Left colon (tissue), 2 donors: ENCODE measurements at regions of chr21 and their contacts with region 1.

Region 1: GRCh38 chr21:43975495-43975993 is 36.6 kb upstream of the TRAPPC10 start:
- DNase-seq: peak; percentile 66 to 85
- ATAC-seq: peak; percentile 80

Region 2: DNA sequence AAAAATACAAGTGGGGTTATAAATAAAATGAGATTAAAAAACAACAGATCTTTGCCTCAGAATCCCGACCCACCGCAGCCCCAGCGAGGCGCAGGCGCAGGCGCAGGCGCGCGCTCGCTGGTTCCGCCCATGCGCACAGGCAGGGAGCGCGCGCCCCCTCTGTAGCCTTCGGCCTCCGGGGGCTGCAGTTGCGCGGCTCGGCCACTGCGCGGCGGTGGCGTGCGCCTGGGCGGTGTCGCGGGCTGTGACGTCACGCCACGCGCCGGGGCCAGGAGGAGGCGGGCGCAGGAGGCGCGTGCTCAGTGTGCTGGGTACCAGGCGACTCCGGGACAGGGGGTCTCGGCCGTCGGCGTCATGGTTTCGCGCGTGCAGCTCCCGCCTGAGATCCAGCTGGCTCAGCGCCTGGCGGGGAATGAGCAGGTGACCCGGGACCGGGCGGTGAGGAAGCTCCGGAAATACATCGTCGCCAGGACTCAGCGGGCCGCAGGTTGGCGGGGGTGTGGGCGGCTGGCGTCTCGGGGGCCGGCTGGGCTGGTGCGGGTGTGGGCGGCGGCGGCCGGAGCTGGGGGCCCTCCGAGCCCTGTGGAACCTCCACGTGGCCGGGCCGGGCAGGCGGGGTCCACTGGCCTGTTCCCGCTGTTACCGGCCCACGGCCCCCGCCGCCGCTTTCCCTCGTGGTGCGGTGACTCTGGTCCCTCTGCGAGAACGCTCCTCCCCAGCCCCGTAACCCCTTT is 186.1 kb before region 1 on chr21 and contains the start of gene RRP1:
- intact Hi-C with region 1: no loop called
- DNase-seq: peak; percentile 77 to 93
- ATAC-seq: peak; percentile 90
- total RNA-seq, gene RRP1: 13.0 to 18.5 TPM

Region 3: DNA sequence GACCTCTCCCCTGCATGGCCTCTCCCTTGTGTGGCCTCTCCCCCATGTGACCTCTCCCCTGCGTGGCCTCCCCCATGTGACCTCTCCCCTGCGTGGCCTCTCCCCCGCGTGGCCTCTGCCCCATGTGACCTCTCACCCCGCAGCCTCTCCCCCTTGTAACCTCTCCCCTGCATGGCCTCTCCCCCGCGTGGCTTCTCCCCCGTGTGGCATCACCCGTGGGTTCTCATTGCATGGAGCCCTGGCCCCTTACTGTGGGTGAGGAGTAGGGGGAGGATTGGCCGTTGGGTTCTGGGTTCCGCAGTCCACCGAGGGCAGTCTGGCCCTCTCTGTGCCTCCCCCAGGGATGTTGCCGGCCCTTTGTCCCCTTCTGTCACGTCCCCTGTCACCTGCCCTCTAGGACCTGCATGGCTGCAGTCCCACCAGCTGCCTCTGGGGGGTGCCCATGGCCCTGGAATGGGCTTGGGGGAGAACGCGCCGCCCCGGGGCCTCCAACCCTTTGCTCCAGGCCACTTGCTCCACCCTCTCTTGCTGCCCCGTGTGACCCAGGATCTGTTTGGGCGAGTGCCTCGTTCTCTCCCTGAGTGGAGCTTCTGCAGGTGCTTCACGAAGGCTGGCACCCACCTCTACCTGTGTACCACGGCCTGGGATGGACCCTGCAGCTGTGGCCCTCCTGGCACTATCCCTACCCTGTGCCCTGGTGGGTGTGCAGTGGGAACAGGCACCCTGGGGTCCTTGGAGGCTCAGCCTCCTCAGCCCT is 164.9 kb before region 1 on chr21:
- intact Hi-C with region 1: loop called in 1 of 2 experiments (anchors 5 kb)
- DNase-seq: peak; percentile 85 to 94
- ATAC-seq: peak; percentile 75

Region 4: DNA sequence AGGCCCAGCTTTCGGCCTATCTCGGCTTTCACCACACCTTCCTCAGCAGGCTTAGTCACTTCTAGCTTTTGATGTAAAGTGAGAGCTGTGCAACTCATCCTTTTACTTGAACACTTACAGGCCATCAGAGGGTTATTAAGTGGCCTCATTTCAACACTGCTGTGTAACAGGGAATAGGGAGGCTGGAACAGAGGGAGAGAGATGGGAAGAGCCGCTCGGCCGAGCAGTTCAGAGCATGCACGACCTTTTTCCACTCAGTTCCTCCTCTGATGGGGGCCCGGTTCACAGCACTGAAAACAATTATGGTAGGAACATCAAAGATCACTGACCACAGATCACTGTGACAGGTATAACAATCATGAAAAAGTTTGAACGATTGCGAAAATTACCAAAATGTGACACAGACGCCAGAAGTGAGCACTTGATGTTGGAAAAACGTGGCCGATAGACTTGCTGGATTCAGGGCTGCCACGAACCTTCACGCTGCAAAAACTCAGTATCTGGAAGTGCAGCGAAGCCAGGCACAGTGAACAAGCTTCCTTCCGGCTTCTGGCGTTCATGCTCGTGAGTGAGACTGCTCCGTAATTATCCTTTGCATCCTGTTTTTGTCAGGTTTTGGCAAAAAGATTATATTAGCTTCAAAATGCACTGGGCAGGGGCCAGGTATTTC is 81.9 kb before region 1 on chr21:
- intact Hi-C with region 1: no loop called
- DNase-seq: no peak
- ATAC-seq: no peak